ENCODE measurements at regions of chr2 and their contacts with region 1.

Region 1: DNA sequence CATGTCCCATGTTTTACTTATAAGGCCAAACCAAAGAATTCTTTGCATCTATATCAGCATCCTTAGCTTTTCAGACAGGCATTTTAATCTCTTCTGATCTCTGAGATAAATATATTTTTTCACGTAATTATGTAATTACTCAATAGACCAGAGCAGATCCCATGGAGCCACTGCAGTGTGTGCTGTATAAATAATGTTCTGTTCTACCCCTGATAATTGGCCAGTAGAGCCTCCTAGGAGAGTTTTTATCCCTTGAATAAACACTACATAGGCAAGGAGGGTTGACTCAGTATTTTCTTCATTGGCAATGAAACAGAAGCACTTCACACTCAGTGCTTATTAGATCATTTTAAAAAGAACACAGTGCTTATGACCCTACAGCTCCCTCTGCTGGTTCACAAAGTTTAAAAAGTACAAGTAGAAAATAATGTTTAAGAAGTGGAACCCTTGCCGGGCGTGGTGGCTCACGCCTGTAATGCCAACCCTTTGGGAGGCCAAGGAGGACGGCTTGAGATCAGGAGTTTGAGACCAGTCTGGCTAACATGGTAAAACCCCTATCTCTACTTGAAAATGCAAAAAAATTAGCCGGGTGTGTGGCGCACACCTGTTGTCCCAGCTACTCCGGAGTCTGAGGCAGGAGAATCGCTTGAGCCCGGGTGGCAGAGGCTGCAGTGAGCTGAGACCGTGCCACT is 91.9 kb downstream of the PPP1R1C start:
- DNase-seq: peak; percentile 72
- ATAC-seq: peak; percentile 85
- H3K4me3 ChIP-seq: no peak overlapping the region
- H3K27ac ChIP-seq: no peak overlapping the region
- H3K4me1 ChIP-seq: peaks cover 5% of the 10 kb centered on the region; the same call in 1 of the 2 replicates
- H3K27me3 ChIP-seq: no peaks in the 10 kb centered on the region
- CTCF ChIP-seq: peak; percentile 84

Region 2: DNA sequence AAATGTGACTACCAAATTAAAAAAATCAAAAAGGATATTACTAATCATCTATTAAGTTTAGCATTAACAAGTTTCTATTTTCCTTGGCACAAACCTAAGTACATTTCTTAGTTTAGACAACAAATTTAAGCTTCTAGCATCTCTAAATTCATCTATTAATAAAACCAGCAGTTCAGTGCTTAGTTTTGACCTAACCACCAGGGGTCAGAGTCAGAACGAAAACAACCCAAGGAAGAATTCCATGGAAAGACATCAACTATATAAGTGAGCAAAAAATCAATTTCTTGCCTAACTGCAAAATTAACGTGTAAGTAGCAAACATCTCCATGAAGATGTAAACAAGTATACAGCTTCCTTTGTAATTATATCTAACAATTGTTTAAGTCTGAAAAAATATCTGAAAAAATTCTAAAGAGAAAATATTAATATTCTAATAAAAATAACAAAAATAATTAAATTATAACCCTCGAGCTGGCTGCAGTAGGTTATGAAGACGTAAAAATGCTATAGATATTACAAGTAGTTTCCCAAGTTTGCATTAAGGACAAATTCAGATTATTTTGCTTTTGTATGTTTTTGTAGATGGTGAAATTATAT is 504.4 kb before region 1 on chr2:
- CTCF ChIA-PET with region 1: no interaction called
- POLR2A ChIA-PET with region 1: no interaction called
- in situ Hi-C with region 1: no loop called
- intact Hi-C with region 1: loop called (anchors 5 kb)
- DNase-seq: no peak
- ATAC-seq: peak; percentile 56; the same call in 1 of the 2 replicates
- H3K4me3 ChIP-seq: no peak overlapping the region
- H3K27ac ChIP-seq: no peak overlapping the region
- H3K4me1 ChIP-seq: no peaks in the 10 kb centered on the region
- H3K27me3 ChIP-seq: no peaks in the 10 kb centered on the region
- CTCF ChIP-seq: peak; percentile 67; the same call in 1 of the 2 replicates

Region 3: GRCh38 chr2:181742922-181743722 is 334.5 kb before region 1 on chr2:
- CTCF ChIA-PET with region 1: interaction called, 8 read pairs
- POLR2A ChIA-PET with region 1: no interaction called
- in situ Hi-C with region 1: no loop called
- intact Hi-C with region 1: loop called (anchors 2 kb)
- DNase-seq: peak; percentile 47
- ATAC-seq: peak; percentile 83
- H3K4me3 ChIP-seq: no peak overlapping the region
- H3K27ac ChIP-seq: peak overlapping the region; percentile 84
- H3K4me1 ChIP-seq: peaks cover 12% of the 10 kb centered on the region
- H3K27me3 ChIP-seq: no peaks in the 10 kb centered on the region
- CTCF ChIP-seq: peak; percentile 70; the same call in 1 of the 2 replicates

Region 4: GRCh38 chr2:181774685-181775084 is 302.9 kb before region 1 on chr2:
- CTCF ChIA-PET with region 1: no interaction called
- POLR2A ChIA-PET with region 1: no interaction called
- in situ Hi-C with region 1: loop called (anchors 25 kb)
- intact Hi-C with region 1: no loop called
- DNase-seq: no peak
- ATAC-seq: no peak
- H3K4me3 ChIP-seq: no peak overlapping the region
- H3K27ac ChIP-seq: peak overlapping the region; percentile 11; the same call in 1 of the 2 replicates
- H3K4me1 ChIP-seq: peaks cover 7% of the 10 kb centered on the region; the same call in 1 of the 2 replicates
- H3K27me3 ChIP-seq: no peaks in the 10 kb centered on the region
- CTCF ChIP-seq: no peak

Region 5: DNA sequence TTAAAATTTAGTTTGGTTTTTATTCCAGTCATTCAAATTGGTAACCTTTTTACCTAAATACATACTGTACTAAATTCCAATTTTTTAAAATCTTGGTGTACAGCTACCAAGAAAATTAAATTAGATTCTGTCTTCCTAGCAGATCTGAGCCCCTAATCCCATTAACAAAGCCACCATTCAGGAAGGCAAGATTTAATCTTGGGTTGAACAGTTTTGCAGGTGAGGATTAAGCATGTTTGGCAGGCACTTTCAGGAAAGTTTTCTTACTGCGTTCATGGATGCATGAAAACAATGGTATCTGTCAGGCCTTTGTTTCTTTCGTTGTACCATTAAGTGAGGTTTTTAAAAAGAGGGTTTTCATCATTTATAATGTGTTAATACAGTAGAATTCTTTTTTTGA is 153.3 kb before region 1 on chr2:
- CTCF ChIA-PET with region 1: no interaction called
- POLR2A ChIA-PET with region 1: no interaction called
- in situ Hi-C with region 1: no loop called
- intact Hi-C with region 1: loop called (anchors 5 kb)
- DNase-seq: no peak
- ATAC-seq: no peak
- H3K4me3 ChIP-seq: no peak overlapping the region
- H3K27ac ChIP-seq: no peak overlapping the region
- H3K4me1 ChIP-seq: no peaks in the 10 kb centered on the region; the same call in 1 of the 2 replicates
- H3K27me3 ChIP-seq: no peaks in the 10 kb centered on the region
- CTCF ChIP-seq: no peak

Measured in Panc1 (cell line).